ENCODE measurements at regions of chr10 and their contacts with region 1.

Region 1: DNA sequence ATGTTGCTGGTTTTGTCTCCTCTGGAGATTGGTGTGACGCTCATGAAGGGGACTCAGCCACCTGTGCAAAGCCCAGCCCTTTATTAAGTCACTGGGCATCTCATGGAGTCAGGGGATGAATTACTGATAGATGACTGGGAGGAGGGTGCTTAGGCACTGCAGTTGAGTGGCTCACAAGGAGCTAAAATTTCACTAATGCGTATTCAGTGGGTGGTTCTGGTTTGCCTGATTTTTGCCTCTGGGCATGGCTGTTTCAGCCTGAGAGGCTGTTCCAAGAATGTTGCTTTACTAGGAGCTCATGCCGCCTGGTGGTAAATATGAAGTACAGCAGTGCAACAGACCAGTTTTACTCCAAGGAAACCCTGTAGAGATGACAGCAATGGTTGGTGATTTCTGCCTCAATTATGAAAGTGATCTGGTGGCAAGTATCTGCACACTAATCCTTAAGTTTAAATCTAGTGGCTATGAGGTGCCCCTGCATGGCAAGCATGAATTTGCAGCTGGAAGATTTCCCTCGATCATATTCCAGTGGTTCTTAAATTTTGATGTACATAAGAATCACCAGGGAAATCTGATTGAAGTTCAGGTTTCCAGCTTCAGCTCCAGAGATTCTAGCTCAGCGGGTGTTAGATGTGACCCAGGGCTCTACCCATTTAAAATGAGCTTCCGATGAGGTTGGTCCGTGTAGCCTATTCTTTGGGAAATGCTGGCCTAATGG is 19.9 kb downstream of the ACTA2 start:
- DNase-seq: peak in 35 of 42 donors; percentile 13 to 78 (median 50)

Region 2: GRCh38 chr10:88835096-88835909 is 97.4 kb before region 1 on chr10:
- intact Hi-C with region 1: loop called (anchors 5 kb)
- DNase-seq: peak; percentile 69 to 93 (median 86)

Region 3: DNA sequence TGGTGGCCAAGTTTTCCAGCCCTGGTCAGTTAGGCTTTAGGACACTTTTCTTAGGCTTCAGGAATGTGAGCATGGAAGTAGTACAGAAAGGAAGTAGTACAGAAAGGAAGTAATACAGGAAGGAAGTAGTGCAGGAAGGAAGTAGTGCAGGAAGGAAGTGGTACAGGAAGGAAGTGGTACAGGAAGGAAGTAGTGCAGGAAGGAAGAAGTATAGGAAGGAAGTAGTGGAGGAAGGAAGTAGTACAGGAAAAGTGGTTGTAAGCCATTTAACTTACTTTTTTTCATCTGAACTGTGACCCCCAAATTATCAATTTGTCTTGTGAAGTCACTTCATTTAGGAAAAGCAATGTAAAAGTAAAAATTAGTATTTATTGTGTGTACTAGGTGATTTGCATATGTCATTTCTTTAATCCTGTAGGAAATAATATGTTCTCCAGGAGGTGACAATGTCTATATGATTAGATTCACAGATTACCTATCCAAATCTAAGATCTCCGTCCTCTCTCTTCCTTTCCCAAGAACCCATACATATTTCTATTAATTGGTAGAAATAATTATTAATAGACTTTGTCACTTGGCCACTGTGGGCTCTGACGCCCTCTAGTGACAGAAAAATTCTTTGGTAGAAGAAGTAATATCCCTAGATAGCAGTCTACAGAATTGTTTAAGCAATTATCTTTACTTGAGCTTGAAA is 54.0 kb after region 1 on chr10:
- intact Hi-C with region 1: loop called (anchors 5 kb)
- DNase-seq: peak in 26 of 42 donors; percentile 14 to 75 (median 37)